Natural killer cell (primary cell): ENCODE measurements at regions of chr10 and their contacts with region 1.

Region 1: GRCh38 chr10:28432210-28432676 is 100.7 kb upstream of the WAC start:
- DNase-seq: peak in 1 of 2 donors; percentile 65
- ATAC-seq: peak; percentile 53 to 78 (median 65)
- H3K4me3 ChIP-seq: no peak overlapping the region
- H3K4me3 Mint-ChIP-seq: no peak overlapping the region
- H3K27ac ChIP-seq: no peak overlapping the region
- H3K27ac Mint-ChIP-seq: no peak overlapping the region
- H3K4me1 ChIP-seq: peaks cover 4% of the 10 kb centered on the region
- H3K4me1 Mint-ChIP-seq: peaks cover 7% of the 10 kb centered on the region in 2 donors
- H3K27me3 ChIP-seq: no peaks in the 10 kb centered on the region
- H3K27me3 Mint-ChIP-seq: peaks cover 0 to 3% of the 10 kb centered on the region in 2 donors
- CTCF ChIP-seq: peak; percentile 82

Region 2: GRCh38 chr10:28179006-28179742 is 253.1 kb before region 1 on chr10:
- intact Hi-C with region 1: no loop called
- DNase-seq: peak in 1 of 2 donors; percentile 80
- ATAC-seq: peak; percentile 65 to 75 (median 71)
- H3K4me3 ChIP-seq: peak overlapping the region; percentile 24
- H3K4me3 Mint-ChIP-seq: peak overlapping the region; percentile 88
- H3K27ac ChIP-seq: peak overlapping the region; percentile 72
- H3K27ac Mint-ChIP-seq: peak overlapping the region; percentile 89 to 96
- H3K4me1 ChIP-seq: peaks cover 7% of the 10 kb centered on the region
- H3K4me1 Mint-ChIP-seq: peaks cover 22 to 24% of the 10 kb centered on the region in 2 donors
- H3K27me3 ChIP-seq: no peaks in the 10 kb centered on the region
- H3K27me3 Mint-ChIP-seq: no peaks in the 10 kb centered on the region
- CTCF ChIP-seq: peak; percentile 94

Region 3: DNA sequence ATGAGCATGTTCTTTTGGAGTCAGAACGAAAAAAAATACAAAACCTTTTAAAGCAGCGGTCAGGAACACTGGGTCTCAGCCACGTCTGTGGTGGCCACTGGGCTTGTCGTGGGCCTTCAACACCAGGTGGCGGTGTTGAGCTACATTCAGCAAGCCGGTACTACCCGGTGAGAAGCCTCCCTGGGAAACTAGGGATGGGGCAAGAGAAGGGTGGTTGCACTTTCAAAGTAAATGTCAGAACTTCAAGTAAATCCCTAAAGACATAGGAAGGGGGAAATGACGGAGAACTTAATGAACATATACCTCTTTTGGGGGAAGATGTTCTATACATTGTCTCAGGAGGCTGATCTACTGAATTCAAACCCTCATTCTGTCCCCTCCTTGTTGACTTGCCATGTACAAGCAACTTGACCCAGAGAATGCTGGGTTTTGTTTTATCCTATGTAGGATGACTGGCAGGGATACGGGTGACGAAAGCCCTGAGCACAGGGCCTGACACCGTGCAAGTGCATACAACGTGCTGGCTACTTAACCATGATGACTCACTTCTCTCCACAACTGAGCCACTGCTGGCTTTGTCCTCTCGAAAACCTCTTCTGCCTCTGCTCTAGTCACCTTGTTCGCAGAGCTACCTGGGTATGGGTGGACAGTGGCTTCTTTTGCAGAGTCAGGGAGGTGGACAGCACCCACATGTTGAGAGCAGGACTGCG is 196.1 kb after region 1 on chr10:
- intact Hi-C with region 1: loop called (anchors 10 kb)
- DNase-seq: peak; percentile 56 to 83
- ATAC-seq: peak; percentile 85 to 93 (median 90)
- H3K4me3 ChIP-seq: no peak overlapping the region
- H3K4me3 Mint-ChIP-seq: no peak overlapping the region
- H3K27ac ChIP-seq: no peak overlapping the region
- H3K27ac Mint-ChIP-seq: no peak overlapping the region
- H3K4me1 ChIP-seq: no peaks in the 10 kb centered on the region
- H3K4me1 Mint-ChIP-seq: peaks cover 12 to 23% of the 10 kb centered on the region in 2 donors
- H3K27me3 ChIP-seq: no peaks in the 10 kb centered on the region
- H3K27me3 Mint-ChIP-seq: peaks cover 14 to 17% of the 10 kb centered on the region in 2 donors
- CTCF ChIP-seq: peak; percentile 93

Region 4: GRCh38 chr10:28644647-28645046 is 212.4 kb after region 1 on chr10:
- intact Hi-C with region 1: no loop called
- DNase-seq: no peak
- ATAC-seq: no peak
- H3K4me3 ChIP-seq: no peak overlapping the region
- H3K4me3 Mint-ChIP-seq: no peak overlapping the region
- H3K27ac ChIP-seq: no peak overlapping the region
- H3K27ac Mint-ChIP-seq: no peak overlapping the region
- H3K4me1 ChIP-seq: no peaks in the 10 kb centered on the region
- H3K4me1 Mint-ChIP-seq: no peaks in the 10 kb centered on the region
- H3K27me3 ChIP-seq: no peaks in the 10 kb centered on the region
- H3K27me3 Mint-ChIP-seq: peaks cover 0 to 8% of the 10 kb centered on the region in 2 donors
- CTCF ChIP-seq: no peak